MCF 10A (cell line): ENCODE measurements at regions of chr6 and their contacts with region 1.

Region 1: DNA sequence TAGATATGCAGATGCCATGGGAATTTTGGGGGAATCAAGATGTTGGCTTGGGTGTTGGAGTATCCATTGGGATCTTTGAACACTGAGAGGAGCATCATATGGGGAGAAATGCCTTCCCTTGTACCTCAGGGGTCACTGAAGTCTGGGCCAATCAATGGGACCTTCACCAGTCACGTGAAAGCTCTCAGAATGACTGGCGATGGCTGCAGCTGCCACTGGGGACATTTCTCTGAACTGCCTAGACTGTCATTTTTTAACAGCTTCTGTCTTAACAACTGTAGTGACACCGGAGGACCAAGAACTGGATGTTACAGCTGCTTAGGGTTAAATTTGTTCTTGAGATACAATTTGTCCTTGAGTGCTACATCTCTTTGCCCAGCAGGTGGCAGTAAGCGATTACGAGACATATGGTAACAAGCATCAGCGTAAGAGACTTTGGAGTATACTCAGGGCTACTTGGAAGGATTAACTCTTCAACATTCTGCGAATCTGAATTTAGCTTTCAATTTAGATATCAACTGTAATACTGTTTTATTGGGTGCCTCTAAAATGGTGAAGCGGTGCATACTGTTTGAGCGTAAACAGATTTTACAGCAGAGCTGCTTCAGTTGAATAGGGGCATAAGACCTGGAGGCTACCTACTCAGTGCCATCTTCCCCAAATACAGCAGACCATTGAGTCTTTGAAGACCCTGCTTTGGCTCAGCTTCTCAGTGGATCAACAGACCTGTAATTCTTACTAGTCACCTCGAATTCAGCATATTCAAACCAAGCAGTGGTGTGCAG is 36.0 kb downstream of the CCN2 start:
- DNase-seq: peak; percentile 84
- H3K4me3 Mint-ChIP-seq: no peak overlapping the region
- H3K27ac Mint-ChIP-seq: no peak overlapping the region
- H3K4me1 Mint-ChIP-seq: no peaks in the 10 kb centered on the region
- H3K27me3 Mint-ChIP-seq: peaks cover 27% of the 10 kb centered on the region
- CTCF ChIP-seq: peak; percentile 62

Region 2: GRCh38 chr6:131694831-131695426 is 220.2 kb before region 1 on chr6:
- CTCF ChIA-PET with region 1: interaction called, 112 read pairs
- POLR2A ChIA-PET with region 1: interaction called, 7 read pairs
- intact Hi-C with region 1: loop called (anchors 1 kb)
- DNase-seq: peak; percentile 78
- H3K4me3 Mint-ChIP-seq: no peak overlapping the region
- H3K27ac Mint-ChIP-seq: no peak overlapping the region
- H3K4me1 Mint-ChIP-seq: no peaks in the 10 kb centered on the region
- H3K27me3 Mint-ChIP-seq: no peaks in the 10 kb centered on the region
- CTCF ChIP-seq: peak; percentile 92

Region 3: GRCh38 chr6:131894735-131895424 is 20.3 kb before region 1 on chr6:
- CTCF ChIA-PET with region 1: interaction called, 13 read pairs
- POLR2A ChIA-PET with region 1: interaction called, 3 read pairs
- intact Hi-C with region 1: no loop called
- DNase-seq: no peak
- H3K4me3 Mint-ChIP-seq: no peak overlapping the region
- H3K27ac Mint-ChIP-seq: no peak overlapping the region
- H3K4me1 Mint-ChIP-seq: no peaks in the 10 kb centered on the region
- H3K27me3 Mint-ChIP-seq: no peaks in the 10 kb centered on the region
- CTCF ChIP-seq: no peak

Region 4: GRCh38 chr6:132130626-132131298 is 215.6 kb after region 1 on chr6:
- CTCF ChIA-PET with region 1: interaction called, 10 read pairs
- POLR2A ChIA-PET with region 1: no interaction called
- intact Hi-C with region 1: no loop called
- DNase-seq: no peak
- H3K4me3 Mint-ChIP-seq: no peak overlapping the region
- H3K27ac Mint-ChIP-seq: no peak overlapping the region
- H3K4me1 Mint-ChIP-seq: no peaks in the 10 kb centered on the region
- H3K27me3 Mint-ChIP-seq: no peaks in the 10 kb centered on the region
- CTCF ChIP-seq: no peak

Region 5: DNA sequence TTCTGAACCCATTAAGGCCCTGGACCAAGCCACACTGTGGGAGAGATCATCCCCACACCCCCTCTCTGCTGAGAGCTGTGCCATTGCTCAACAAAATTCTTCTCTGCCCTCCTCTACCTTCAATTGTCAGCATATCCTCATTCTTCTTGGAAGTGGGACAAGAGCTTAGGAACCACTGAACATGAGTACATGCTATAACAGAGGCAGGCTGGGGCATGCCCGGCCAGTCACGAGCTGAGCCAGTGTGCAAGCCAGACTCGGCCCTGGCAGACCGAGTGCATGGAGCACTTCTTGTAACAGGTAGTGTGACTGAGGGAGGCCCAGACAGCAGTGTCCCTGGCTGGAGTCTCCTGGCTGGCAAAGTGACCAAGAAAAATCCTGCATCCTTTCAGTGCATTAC is 337.0 kb after region 1 on chr6:
- CTCF ChIA-PET with region 1: interaction called, 32 read pairs
- POLR2A ChIA-PET with region 1: no interaction called
- intact Hi-C with region 1: no loop called
- DNase-seq: peak; percentile 60
- H3K4me3 Mint-ChIP-seq: no peak overlapping the region
- H3K27ac Mint-ChIP-seq: peak overlapping the region; percentile 57
- H3K4me1 Mint-ChIP-seq: peaks cover 11% of the 10 kb centered on the region
- H3K27me3 Mint-ChIP-seq: no peaks in the 10 kb centered on the region
- CTCF ChIP-seq: no peak

Region 6: DNA sequence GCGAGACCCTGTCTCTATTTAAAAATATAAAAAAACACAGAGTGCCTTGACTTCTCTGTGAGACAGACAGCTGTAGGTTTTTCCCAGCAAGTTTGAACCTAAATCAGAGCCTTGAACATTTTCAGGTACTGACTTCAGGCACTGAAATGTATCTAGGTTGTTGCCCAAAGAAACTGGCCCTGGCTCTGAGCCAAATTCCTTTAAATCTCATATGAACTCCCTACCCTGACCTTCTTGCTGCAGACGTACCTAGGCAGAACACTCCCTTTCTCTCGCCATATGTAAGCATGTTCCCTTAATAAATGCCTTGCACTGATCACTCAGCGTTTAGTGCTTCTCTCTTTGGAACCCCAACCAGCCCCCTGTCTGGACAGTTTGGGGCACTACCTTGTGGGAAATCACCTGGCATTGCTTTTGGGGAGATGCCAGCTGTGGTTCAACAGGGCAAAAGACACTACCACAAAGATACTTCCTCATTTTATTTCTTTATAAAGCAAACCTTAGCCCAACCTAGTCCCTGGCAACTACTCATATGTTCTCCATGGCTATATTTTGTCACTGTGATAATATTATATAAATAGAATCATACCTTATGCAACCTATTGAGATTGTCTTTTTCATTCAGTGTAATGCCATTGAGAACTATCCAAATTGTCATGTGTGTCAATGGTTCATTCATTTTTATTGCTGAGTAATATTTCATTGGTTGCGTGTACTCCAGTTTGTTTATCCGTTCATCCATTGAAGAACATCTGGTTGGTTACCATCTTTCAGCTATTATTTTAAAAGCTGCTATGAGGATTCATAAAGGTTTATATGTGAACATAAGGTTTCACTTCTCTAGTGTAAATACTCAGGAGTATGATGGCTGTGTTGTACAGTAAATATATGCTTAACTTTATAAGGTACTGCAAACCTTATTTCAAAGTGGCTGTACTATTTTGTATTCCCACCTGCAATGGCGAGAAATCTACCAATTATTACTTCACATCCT is 371.2 kb after region 1 on chr6:
- CTCF ChIA-PET with region 1: interaction called, 10 read pairs
- POLR2A ChIA-PET with region 1: no interaction called
- intact Hi-C with region 1: no loop called
- DNase-seq: peak; percentile 7
- H3K4me3 Mint-ChIP-seq: no peak overlapping the region
- H3K27ac Mint-ChIP-seq: no peak overlapping the region
- H3K4me1 Mint-ChIP-seq: no peaks in the 10 kb centered on the region
- H3K27me3 Mint-ChIP-seq: no peaks in the 10 kb centered on the region
- CTCF ChIP-seq: no peak